K562 (cell line): ENCODE measurements at regions of chr4 and their contacts with region 1.

Region 1: DNA sequence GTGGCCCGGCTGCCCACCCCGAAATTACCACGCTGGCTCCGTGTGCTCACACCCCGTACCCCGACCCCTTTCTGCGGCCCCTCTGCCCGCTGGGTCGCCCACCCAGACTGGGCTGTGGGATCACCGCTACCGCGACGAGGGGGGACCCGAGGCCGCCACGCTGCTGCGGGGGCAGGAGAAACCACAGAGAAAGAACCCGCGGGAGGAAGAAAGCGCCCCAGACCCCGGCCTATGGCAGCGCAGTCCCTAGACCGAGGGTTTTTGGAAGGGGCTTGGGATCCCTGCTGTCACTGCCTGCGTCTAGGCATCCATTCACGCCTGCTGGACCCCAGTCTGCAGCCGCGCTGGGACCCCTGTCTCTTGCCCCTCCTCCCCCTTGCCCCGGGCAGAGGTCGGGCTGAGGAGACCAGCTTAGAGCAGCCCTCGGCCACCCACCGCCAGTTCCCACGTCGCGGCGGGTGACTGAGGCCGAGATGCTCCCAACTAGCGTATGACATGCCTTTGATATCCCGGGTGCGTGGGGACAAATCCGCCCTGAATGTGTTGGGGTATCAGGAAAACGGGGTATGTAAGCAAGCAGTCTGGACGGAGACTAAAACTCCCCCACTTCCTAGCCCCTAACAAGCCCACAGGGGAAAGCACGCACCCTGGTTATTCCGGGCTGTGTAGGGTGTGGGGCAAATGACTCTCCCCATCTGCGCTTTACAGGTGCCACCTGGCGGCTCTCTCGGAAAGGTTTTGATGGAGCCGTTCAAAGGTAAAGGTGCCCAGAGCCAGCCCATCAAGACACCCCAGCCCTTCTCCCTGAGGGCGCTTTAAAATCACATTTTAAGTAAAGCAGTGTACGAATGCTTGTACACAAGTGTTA is 862 bp upstream of the INPP4B start:
- DNase-seq: peak in 1 of 4 experiments; percentile 6
- ATAC-seq: peak; percentile 77
- H3K4me3 ChIP-seq: no peak overlapping the region
- H3K27ac ChIP-seq: no peak overlapping the region
- H3K4me1 ChIP-seq: peaks cover 0 to 6% of the 10 kb centered on the region in 2 experiments; a peak in 1 of 5 replicates
- H3K27me3 ChIP-seq: no peaks in the 10 kb centered on the region
- CTCF ChIP-seq: peak in 2 of 3 experiments; percentile 14 to 18; a peak in 2 of 6 replicates
- EP300 ChIP-seq: no peak
- POLR2A ChIP-seq: no peak
- RAD21 ChIP-seq: no peak

Region 2: GRCh38 chr4:141307241-141307689 is 1539.7 kb before region 1 on chr4:
- CTCF ChIA-PET with region 1: no interaction called
- POLR2A ChIA-PET with region 1: no interaction called
- in situ Hi-C with region 1: no loop called
- intact Hi-C with region 1: loop called (anchors 10 kb)
- DNase-seq: peak; percentile 37 to 55 (median 48)
- ATAC-seq: peak; percentile 95
- H3K4me3 ChIP-seq: no peak overlapping the region
- H3K27ac ChIP-seq: no peak overlapping the region
- H3K4me1 ChIP-seq: no peaks in the 10 kb centered on the region
- H3K27me3 ChIP-seq: no peaks in the 10 kb centered on the region
- CTCF ChIP-seq: peak; percentile 58 to 71 (median 67)
- EP300 ChIP-seq: no peak
- POLR2A ChIP-seq: no peak
- RAD21 ChIP-seq: peak; percentile 37 to 65; a peak in 3 of 4 replicates